ENCODE measurements at regions of chr5 and their contacts with region 1.

Region 1: DNA sequence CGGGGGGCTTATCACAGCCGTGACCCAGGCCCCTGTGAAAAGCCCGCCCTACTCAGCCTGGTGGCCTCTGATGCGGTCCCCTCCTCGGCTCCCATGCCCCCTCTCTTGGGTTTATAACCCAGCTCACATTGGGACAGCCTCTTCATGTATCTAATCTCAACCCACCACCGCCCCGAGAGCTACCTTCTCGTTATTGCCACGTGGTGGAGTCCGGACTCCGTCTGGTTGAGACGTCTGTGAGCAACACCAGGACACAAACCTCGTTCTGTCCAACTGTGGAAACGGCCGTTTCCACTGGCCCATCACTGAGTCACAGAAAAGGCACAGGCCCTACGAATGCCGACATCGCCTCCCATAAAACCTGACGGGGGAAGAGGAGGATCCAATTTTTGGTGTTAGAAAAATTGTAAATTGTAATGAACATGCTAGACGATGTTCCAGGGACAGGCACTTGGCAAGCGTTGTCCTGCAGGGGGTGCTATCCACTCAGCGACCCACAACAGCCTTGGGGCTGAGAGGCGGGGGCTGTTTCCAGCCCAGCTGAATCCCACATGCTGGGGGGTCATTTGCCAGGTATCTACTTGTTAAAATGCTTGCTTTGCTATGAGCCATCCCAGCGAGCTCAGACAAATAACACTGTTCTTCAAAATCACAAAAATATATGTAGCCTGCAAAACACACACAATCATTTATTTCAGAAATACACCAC is 37.3 kb upstream of the N4BP3 start:
- DNase-seq: peak; percentile 44 to 89
- H3K4me3 ChIP-seq: no peak overlapping the region
- CTCF ChIP-seq: peak in 1 of 3 donors; percentile 76
- POLR2A ChIP-seq: no peak

Region 2: DNA sequence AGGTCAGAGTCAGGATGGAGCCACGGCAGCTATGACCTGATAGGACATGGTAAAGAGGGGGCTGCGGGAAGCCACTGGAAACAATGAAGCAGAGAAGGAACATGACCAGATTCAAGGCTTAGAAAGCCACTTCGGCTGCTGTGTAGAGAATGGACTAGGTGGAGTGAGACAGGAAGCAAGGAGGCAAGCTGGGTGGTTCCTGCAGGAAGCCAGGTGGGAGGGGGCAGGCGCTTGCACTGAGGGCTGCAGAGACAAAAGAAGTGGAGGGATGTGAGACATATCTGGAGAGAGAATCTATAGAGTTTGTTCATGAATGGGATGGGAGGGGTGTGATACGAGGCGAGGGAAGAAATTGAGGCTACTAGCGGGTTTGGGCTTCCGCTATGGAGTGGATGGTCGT is 18.4 kb after region 1 on chr5:
- intact Hi-C with region 1: no loop called
- DNase-seq: no peak
- H3K4me3 ChIP-seq: no peak overlapping the region
- CTCF ChIP-seq: no peak
- POLR2A ChIP-seq: no peak

Region 3: GRCh38 chr5:178146020-178146820 is 70.2 kb after region 1 on chr5:
- intact Hi-C with region 1: loop called (anchors 5 kb)
- DNase-seq: peak in 1 of 2 donors; percentile 59
- H3K4me3 ChIP-seq: no peak overlapping the region
- CTCF ChIP-seq: no peak
- POLR2A ChIP-seq: no peak

Region 4: DNA sequence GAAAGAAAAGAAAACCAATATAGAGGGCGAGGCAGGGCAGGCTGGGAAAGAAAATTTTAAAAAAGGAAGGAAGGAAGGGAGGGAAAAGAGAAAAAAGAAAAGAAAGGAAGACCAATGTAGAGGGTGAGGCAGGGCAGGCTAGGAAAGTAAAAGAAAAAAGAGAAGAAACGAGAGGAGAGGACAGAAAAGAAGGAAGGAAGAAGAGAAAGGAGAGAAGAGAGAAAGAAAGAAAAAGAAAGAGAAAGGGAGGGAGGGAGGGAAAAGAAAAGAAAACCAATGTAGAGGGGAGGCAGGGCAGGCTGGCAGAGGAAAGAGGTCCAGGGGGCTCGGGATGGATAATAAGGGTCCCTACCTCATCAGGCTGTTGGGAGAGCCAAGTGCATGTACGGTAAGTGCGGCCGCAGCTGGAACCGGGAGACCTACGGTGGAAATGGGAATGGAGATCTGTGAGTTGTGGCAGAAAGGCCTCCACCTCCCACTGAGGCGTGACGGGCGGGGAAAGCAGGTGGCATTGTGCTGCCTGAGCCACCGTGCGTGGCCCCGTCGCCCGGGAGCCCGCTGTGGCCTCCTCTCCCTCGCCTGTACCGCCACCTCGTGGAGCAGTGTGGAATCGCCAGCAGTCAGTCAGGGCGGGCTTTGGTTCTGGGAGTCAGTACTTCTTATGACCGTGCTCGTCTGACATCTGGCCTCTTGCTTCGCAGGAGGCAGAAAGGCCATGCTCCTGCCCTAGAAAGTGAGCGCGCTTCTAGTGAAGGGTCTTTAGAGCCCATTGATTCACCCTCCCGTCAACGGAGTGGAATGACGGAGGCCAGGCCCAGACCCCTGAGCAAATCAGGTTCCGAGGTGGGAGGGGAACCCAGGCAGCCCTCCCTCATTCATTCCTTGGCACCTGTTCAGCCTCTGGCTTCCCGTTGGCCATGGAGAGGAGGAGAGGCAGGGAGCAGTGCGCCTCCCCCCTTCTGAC is 88.1 kb after region 1 on chr5:
- intact Hi-C with region 1: loop called (anchors 5 kb)
- DNase-seq: peak; percentile 77 to 97
- H3K4me3 ChIP-seq: no peak overlapping the region
- CTCF ChIP-seq: peak in 1 of 3 donors; percentile 81
- POLR2A ChIP-seq: no peak

Measured in lower leg skin (tissue), 4 donors.